ENCODE measurements at regions of chr3 and their contacts with region 1.

Region 1: GRCh38 chr3:12875857-12876836 is 34.8 kb upstream of the RPL32 start:
- DNase-seq: peak in 1 of 4 donors; percentile 72
- ATAC-seq: peak; percentile 81
- H3K4me3 ChIP-seq: peak overlapping the region in 1 of 2 donors; percentile 17
- H3K27ac ChIP-seq: no peak overlapping the region
- H3K4me1 ChIP-seq: peaks cover 0 to 7% of the 10 kb centered on the region in 2 donors
- H3K27me3 ChIP-seq: peaks cover 0 to 20% of the 10 kb centered on the region in 2 donors
- CTCF ChIP-seq: no peak

Region 2: GRCh38 chr3:12984023-12984823 is 108.1 kb after region 1 on chr3:
- intact Hi-C with region 1: loop called in 1 of 2 experiments (anchors 10 kb)
- DNase-seq: peak in 2 of 4 donors; percentile 48 to 72
- ATAC-seq: peak; percentile 91
- H3K4me3 ChIP-seq: no peak overlapping the region
- H3K27ac ChIP-seq: no peak overlapping the region
- H3K4me1 ChIP-seq: peaks cover 0 to 17% of the 10 kb centered on the region in 2 donors
- H3K27me3 ChIP-seq: no peaks in the 10 kb centered on the region
- CTCF ChIP-seq: peak; percentile 56 to 75

Region 3: GRCh38 chr3:13091898-13092611 is 215.9 kb after region 1 on chr3:
- intact Hi-C with region 1: no loop called
- DNase-seq: peak; percentile 62 to 96 (median 81)
- ATAC-seq: peak; percentile 97
- H3K4me3 ChIP-seq: no peak overlapping the region
- H3K27ac ChIP-seq: no peak overlapping the region
- H3K4me1 ChIP-seq: peaks cover 2 to 7% of the 10 kb centered on the region in 2 donors
- H3K27me3 ChIP-seq: peaks cover 0 to 19% of the 10 kb centered on the region in 2 donors
- CTCF ChIP-seq: peak; percentile 95 to 96

Measured in left lung (tissue), 14 donors.